WTC11 (cell line): ENCODE measurements at regions of chr5 and their contacts with region 1.

Region 1: DNA sequence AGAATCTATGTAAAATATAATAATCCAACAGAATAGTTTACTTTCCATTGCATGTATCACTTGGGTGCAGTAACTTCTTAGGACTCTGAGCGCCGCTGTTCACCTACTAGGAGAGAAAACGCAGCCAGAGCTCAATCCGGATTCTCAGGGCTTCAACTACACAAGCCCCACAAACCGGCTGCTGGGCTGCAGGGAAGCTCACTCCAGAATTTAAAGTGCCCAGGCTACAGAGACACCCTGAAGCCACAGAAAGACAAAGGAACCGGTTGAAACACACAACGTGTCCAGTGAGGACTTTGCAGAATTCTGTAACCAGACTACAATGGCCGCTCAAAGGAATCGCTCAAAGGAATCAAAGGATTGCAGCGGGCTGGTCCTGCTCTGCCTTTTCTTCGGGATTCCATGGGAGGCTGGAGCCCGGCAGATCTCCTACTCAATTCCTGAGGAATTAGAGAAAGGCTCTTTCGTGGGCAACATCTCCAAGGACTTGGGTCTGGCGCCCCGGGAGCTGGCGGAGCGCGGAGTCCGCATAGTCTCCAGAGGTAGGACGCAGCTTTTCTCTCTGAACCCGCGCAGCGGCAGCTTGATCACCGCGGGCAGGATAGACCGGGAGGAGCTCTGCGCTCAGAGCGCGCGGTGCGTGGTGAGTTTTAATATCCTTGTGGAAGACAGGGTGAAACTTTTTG is at the start of gene PCDHGA10:
- DNase-seq: peak; percentile 78
- ATAC-seq: peak; percentile 43
- H3K4me3 Mint-ChIP-seq: peak within 1 kb of the TSS; percentile 94
- H3K27ac Mint-ChIP-seq: peak within 1 kb of the TSS; percentile 51
- H3K4me1 Mint-ChIP-seq: peaks cover 27% of the 10 kb centered on the region
- H3K27me3 Mint-ChIP-seq: peaks cover 28% of the 10 kb centered on the region
- CTCF ChIP-seq: peak; percentile 71
- total RNA-seq, gene PCDHGA10: 10.7 to 11.9 TPM (median 11.0 TPM) in 3 replicates

Region 2: GRCh38 chr5:141199359-141200235 is 213.4 kb before region 1 on chr5 and contains the start of gene PCDHB11:
- CTCF ChIA-PET with region 1: interaction called, 13 read pairs
- POLR2A ChIA-PET with region 1: no interaction called
- DNase-seq: no peak
- ATAC-seq: peak; percentile 67
- H3K4me3 Mint-ChIP-seq: peak within 1 kb of the TSS; percentile 24
- H3K27ac Mint-ChIP-seq: no peak within 1 kb of the TSS
- H3K4me1 Mint-ChIP-seq: peaks cover 7% of the 10 kb centered on the region
- H3K27me3 Mint-ChIP-seq: no peaks in the 10 kb centered on the region; the same call in 1 of the 2 replicates
- CTCF ChIP-seq: peak; percentile 32; the same call in 1 of the 2 replicates
- total RNA-seq, gene PCDHB11: 0.61 to 1.2 TPM (median 0.92 TPM) in 3 replicates

Region 3: GRCh38 chr5:141303756-141304155 is 109.2 kb before region 1 on chr5 and contains the start of gene SLC25A2:
- CTCF ChIA-PET with region 1: no interaction called
- POLR2A ChIA-PET with region 1: no interaction called
- DNase-seq: no peak
- ATAC-seq: no peak
- H3K4me3 Mint-ChIP-seq: no peak within 1 kb of the TSS
- H3K27ac Mint-ChIP-seq: no peak within 1 kb of the TSS
- H3K4me1 Mint-ChIP-seq: no peaks in the 10 kb centered on the region
- H3K27me3 Mint-ChIP-seq: no peaks in the 10 kb centered on the region
- CTCF ChIP-seq: no peak
- total RNA-seq, gene SLC25A2: 0.24 TPM in 1 of 3 replicates, not detected in the others

Region 4: DNA sequence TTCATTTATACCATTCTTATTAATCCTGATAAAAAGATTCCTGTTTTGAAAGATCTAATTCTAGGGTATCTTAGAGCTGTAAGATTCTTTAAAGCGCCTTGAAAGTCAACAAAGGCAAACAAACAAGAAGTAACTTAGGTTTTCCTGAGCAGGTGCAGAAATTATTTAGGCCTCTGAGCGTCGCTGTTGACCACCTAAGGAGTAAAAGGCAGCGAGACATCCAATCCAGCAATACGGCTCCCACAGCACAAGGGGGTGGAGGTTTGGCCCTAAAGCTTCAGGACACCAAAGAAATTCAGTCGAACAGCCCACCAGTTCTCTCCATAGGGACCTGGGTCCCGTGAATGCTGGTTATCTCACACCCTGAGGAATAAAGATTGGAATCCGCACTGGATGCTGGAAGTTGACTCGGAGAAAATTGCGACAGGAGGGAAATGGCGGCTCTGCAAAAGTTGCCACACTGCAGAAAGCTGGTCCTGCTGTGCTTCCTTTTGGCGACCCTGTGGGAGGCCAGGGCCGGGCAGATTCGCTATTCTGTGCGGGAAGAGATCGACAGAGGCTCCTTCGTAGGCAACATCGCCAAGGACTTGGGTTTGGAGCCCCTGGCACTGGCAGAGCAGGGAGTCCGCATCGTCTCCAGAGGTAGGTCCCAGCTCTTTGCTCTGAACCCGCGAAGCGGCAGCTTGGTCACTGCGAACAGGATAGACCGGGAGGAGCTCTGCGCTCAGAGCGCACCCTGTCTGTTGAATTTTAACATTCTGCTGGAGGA is 74.3 kb before region 1 on chr5 and contains the start of gene PCDHGA2:
- CTCF ChIA-PET with region 1: interaction called, 16 read pairs
- POLR2A ChIA-PET with region 1: no interaction called
- DNase-seq: peak; percentile 60
- ATAC-seq: peak; percentile 78
- H3K4me3 Mint-ChIP-seq: peak within 1 kb of the TSS; percentile 30; the same call in 1 of the 2 replicates
- H3K27ac Mint-ChIP-seq: no peak within 1 kb of the TSS
- H3K4me1 Mint-ChIP-seq: peaks cover 1% of the 10 kb centered on the region; the same call in 1 of the 2 replicates
- H3K27me3 Mint-ChIP-seq: no peaks in the 10 kb centered on the region; the same call in 1 of the 2 replicates
- CTCF ChIP-seq: peak; percentile 30; the same call in 1 of the 2 replicates
- total RNA-seq, gene PCDHGA2: 0.66 to 0.96 TPM (median 0.94 TPM) in 3 replicates

Region 5: DNA sequence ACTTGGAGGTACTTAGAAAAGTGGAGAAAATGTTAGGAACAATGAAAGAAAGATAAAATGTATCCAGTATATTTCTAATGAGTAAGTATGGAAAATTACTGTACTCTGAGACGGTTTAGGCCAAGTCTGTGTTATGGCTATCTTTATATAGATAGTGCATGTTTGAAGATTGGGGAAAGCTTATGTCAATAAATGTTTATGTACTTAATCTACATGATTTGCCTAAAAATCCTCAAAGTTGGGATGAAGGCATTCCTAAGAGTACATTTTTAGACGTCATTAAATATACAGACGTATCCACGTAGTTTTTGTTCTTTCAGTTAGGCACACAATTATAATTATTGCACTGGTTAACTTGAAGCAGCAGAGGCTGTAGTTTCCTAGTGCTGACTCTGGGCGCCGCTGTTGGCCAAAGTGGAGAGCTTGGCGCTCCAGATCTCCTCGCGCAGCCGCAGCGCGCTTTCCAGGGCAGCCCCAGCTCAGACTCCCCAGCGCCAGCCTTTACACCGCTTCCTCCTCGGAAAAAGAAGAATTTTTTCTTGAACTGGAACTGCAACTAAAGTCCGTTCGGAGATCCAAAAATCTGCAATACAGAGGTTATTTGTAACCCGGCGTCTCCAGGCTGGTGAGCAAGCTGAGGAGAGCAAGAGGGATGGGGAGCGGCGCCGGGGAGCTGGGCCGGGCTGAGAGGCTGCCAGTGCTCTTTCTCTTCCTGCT is 25.6 kb before region 1 on chr5 and contains the start of gene PCDHGB4:
- CTCF ChIA-PET with region 1: interaction called, 20 read pairs
- POLR2A ChIA-PET with region 1: no interaction called
- DNase-seq: peak; percentile 80
- ATAC-seq: peak; percentile 96
- H3K4me3 Mint-ChIP-seq: peak within 1 kb of the TSS; percentile 81
- H3K27ac Mint-ChIP-seq: no peak within 1 kb of the TSS
- H3K4me1 Mint-ChIP-seq: 0 out of 2 replicates have a peak, but pooled peaks cover 3% of the 10 kb centered on the region
- H3K27me3 Mint-ChIP-seq: peaks cover 37% of the 10 kb centered on the region
- CTCF ChIP-seq: peak; percentile 48; the same call in 1 of the 2 replicates
- total RNA-seq, gene PCDHGB4: 7.8 to 9.1 TPM (median 8.8 TPM) in 3 replicates

Region 6: DNA sequence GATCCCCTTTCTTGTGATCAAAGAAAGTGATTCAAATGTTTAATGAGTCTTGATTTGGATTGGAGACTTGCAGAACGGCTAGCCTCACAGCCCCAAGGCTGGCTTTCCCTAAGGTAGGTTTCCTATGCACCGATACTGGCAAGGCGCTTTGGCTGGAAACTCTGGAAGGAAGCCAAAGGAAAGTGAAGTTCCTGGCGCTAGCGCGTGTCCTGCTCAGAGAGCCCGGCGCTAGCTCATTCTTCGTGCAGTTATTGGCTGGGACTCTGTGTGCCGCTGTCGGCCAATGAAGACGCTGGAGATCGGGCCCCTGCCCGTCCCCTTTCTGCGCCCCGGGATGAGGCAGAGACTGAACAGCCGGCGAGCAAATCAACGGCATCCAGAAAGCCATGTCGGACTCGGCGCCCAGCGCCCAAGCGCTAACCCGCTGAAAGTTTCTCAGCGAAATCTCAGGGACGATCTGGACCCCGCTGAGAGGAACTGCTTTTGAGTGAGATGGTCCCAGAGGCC is 62.7 kb after region 1 on chr5 and contains the start of gene PCDHGC3:
- CTCF ChIA-PET with region 1: interaction called, 75 read pairs
- POLR2A ChIA-PET with region 1: no interaction called
- DNase-seq: peak; percentile 92
- ATAC-seq: peak; percentile 96
- H3K4me3 Mint-ChIP-seq: peak within 1 kb of the TSS; percentile 92
- H3K27ac Mint-ChIP-seq: peak within 1 kb of the TSS; percentile 93
- H3K4me1 Mint-ChIP-seq: peaks cover 35% of the 10 kb centered on the region
- H3K27me3 Mint-ChIP-seq: peaks cover 28% of the 10 kb centered on the region
- CTCF ChIP-seq: no peak
- total RNA-seq, gene PCDHGC3: 28.1 to 29.4 TPM (median 29.1 TPM) in 3 replicates

Region 7: GRCh38 chr5:141524604-141525597 is 111.9 kb after region 1 on chr5:
- CTCF ChIA-PET with region 1: interaction called, 52 read pairs
- POLR2A ChIA-PET with region 1: interaction called, 3 read pairs
- DNase-seq: peak; percentile 93
- ATAC-seq: peak; percentile 98
- H3K4me3 Mint-ChIP-seq: no peak overlapping the region
- H3K27ac Mint-ChIP-seq: peak overlapping the region; percentile 87
- H3K4me1 Mint-ChIP-seq: peaks cover 23% of the 10 kb centered on the region
- H3K27me3 Mint-ChIP-seq: no peaks in the 10 kb centered on the region
- CTCF ChIP-seq: peak; percentile 97

Region 8: DNA sequence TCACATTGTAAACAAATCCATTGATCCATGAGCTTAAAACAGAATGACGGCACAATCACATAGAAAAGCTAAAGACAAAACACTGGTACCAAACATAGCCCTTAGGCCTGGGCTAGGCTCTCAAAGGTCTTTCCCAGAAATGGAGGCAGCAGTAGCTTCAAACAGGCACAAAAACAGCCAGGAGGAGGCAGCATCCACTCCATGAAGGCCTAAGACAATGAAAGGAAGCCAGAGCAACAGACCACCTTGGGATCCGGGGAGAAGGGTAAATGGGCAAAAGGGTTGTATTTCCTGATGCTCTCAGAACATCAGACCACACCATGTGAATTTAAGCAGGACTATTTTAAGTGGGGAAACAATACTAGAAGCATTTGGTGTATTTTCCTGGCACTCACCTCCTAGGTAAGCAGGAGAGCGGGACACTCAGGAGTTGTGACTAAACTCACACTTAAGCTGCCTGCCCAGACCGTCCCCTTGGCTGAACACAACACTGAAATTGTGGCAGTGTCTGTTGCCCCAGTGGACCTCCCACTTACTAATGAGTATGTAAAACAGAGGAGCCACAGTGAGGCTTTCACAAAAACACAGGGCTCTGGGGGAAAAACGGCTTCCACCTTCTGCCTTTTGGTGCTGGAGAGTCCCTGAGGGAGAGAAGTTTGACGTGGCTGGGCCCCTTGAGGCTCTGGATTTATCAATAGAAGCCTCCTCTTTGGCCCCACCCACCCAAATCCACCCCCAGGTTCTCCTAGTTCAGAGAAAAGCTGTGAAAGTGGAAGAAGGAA is 587.9 kb after region 1 on chr5:
- CTCF ChIA-PET with region 1: no interaction called
- POLR2A ChIA-PET with region 1: no interaction called
- DNase-seq: peak; percentile 26
- ATAC-seq: peak; percentile 67
- H3K4me3 Mint-ChIP-seq: no peak overlapping the region
- H3K27ac Mint-ChIP-seq: no peak overlapping the region; the same call in 1 of the 2 replicates
- H3K4me1 Mint-ChIP-seq: no peaks in the 10 kb centered on the region
- H3K27me3 Mint-ChIP-seq: no peaks in the 10 kb centered on the region
- CTCF ChIP-seq: no peak